Activated CD8-positive, alpha-beta T cell treated with anti-CD3 and anti-CD28 coated beads for 36 hours (primary cell): ENCODE measurements at regions of chr17 and their contacts with region 1.

Region 1: GRCh38 chr17:73192894-73193701 is at the start of gene COG1:
- DNase-seq: peak; percentile 87
- ATAC-seq: peak; percentile 81
- H3K4me3 Mint-ChIP-seq: peak within 1 kb of the TSS; percentile 95
- H3K27ac Mint-ChIP-seq: peak within 1 kb of the TSS; percentile 99
- H3K4me1 Mint-ChIP-seq: peaks cover 22% of the 10 kb centered on the region
- H3K27me3 Mint-ChIP-seq: no peaks in the 10 kb centered on the region
- CTCF ChIP-seq: no peak
- total RNA-seq, gene COG1: 24.6 to 27.9 TPM

Region 2: GRCh38 chr17:73142872-73143381 is 50.2 kb before region 1 on chr17:
- CTCF ChIA-PET with region 1: interaction called, 3 read pairs
- POLR2A ChIA-PET with region 1: interaction called, 10 read pairs
- intact Hi-C with region 1: no loop called
- DNase-seq: peak; percentile 35
- ATAC-seq: peak; percentile 73
- H3K4me3 Mint-ChIP-seq: no peak overlapping the region
- H3K27ac Mint-ChIP-seq: peak overlapping the region; percentile 44
- H3K4me1 Mint-ChIP-seq: peaks cover 14% of the 10 kb centered on the region
- H3K27me3 Mint-ChIP-seq: no peaks in the 10 kb centered on the region
- CTCF ChIP-seq: no peak

Region 3: GRCh38 chr17:73203135-73203787 is 10.2 kb after region 1 on chr17:
- CTCF ChIA-PET with region 1: interaction called, 6 read pairs
- POLR2A ChIA-PET with region 1: interaction called, 39 read pairs
- intact Hi-C with region 1: no loop called
- DNase-seq: peak; percentile 36
- ATAC-seq: peak; percentile 75
- H3K4me3 Mint-ChIP-seq: peak overlapping the region; percentile 13
- H3K27ac Mint-ChIP-seq: peak overlapping the region; percentile 80
- H3K4me1 Mint-ChIP-seq: peaks cover 24% of the 10 kb centered on the region
- H3K27me3 Mint-ChIP-seq: no peaks in the 10 kb centered on the region
- CTCF ChIP-seq: no peak

Region 4: GRCh38 chr17:73226556-73227172 is 33.6 kb after region 1 on chr17:
- CTCF ChIA-PET with region 1: interaction called, 41 read pairs
- POLR2A ChIA-PET with region 1: interaction called, 39 read pairs
- intact Hi-C with region 1: loop called (anchors 5 kb)
- DNase-seq: no peak
- ATAC-seq: peak; percentile 31
- H3K4me3 Mint-ChIP-seq: peak overlapping the region; percentile 29
- H3K27ac Mint-ChIP-seq: peak overlapping the region; percentile 71
- H3K4me1 Mint-ChIP-seq: peaks cover 58% of the 10 kb centered on the region
- H3K27me3 Mint-ChIP-seq: no peaks in the 10 kb centered on the region
- CTCF ChIP-seq: no peak

Region 5: GRCh38 chr17:73231841-73232586 is 38.9 kb after region 1 on chr17:
- CTCF ChIA-PET with region 1: interaction called, 41 read pairs
- POLR2A ChIA-PET with region 1: interaction called, 39 read pairs
- intact Hi-C with region 1: loop called (anchors 5 kb)
- DNase-seq: peak; percentile 98
- ATAC-seq: peak; percentile 95
- H3K4me3 Mint-ChIP-seq: peak overlapping the region; percentile 93
- H3K27ac Mint-ChIP-seq: peak overlapping the region; percentile 97
- H3K4me1 Mint-ChIP-seq: peaks cover 58% of the 10 kb centered on the region
- H3K27me3 Mint-ChIP-seq: no peaks in the 10 kb centered on the region
- CTCF ChIP-seq: no peak